Endothelial cell of umbilical vein (primary cell): ENCODE measurements at regions of chr7 and their contacts with region 1.

Region 1: GRCh38 chr7:30983042-30983913 is 19.5 kb downstream of the GHRHR start:
- DNase-seq: peak; percentile 75
- H3K4me3 ChIP-seq: no peak overlapping the region
- H3K27ac ChIP-seq: no peak overlapping the region
- H3K4me1 ChIP-seq: peaks cover 26% of the 10 kb centered on the region
- H3K27me3 ChIP-seq: peaks cover 4 to 5% of the 10 kb centered on the region in 2 experiments
- CTCF ChIP-seq: peak; percentile 80 to 99
- POLR2A ChIP-seq: no peak

Region 2: DNA sequence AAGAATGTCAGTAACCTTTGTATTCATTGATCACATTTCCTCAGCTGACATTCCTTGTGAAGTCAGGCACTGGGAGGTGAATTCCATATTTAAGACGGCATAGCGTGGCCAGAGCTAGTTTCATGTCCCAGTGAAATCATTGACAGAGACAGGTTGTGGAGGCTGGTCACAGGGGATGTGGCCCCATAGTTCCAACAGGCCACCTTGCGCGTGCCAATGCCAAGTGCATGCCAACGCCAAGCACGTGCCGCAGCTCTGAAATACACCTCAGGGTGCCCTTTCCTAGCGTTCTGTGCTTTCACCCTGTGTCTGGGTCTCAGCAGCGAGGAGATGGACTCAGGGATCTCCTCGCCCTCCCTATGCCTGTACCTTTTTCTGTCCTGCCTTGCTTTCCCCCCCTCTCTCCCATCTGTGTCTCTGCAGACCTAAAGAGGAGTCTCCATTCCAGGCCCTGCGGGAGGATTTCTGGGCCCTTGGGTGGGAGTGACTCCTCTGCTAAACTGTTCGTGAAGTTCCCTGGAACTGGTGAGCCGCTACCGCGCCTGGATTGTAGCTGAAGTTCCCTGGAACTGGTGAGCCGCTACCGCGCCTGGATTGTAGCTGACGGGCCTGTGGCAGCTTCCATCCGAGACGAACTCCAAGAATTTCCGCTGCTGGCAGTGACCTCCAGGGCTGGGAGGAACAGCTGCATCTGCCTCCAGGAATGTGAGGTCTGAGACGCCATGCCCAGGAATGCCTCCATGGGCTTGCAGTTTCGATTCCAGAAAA is 51.9 kb before region 1 on chr7:
- CTCF ChIA-PET with region 1: interaction called, 11 read pairs
- POLR2A ChIA-PET with region 1: interaction called, 13 read pairs
- dilution Hi-C with region 1: no loop called
- intact Hi-C with region 1: no loop called
- DNase-seq: no peak
- H3K4me3 ChIP-seq: no peak overlapping the region
- H3K27ac ChIP-seq: no peak overlapping the region
- H3K4me1 ChIP-seq: no peaks in the 10 kb centered on the region
- H3K27me3 ChIP-seq: peaks cover 0 to 1% of the 10 kb centered on the region in 2 experiments
- CTCF ChIP-seq: no peak
- POLR2A ChIP-seq: no peak

Region 3: GRCh38 chr7:31027161-31027965 is 44.1 kb after region 1 on chr7:
- CTCF ChIA-PET with region 1: interaction called, 14 read pairs
- POLR2A ChIA-PET with region 1: no interaction called
- dilution Hi-C with region 1: no loop called
- intact Hi-C with region 1: no loop called
- DNase-seq: no peak
- H3K4me3 ChIP-seq: no peak overlapping the region
- H3K27ac ChIP-seq: no peak overlapping the region
- H3K4me1 ChIP-seq: no peaks in the 10 kb centered on the region
- H3K27me3 ChIP-seq: peaks cover 0 to 5% of the 10 kb centered on the region in 2 experiments
- CTCF ChIP-seq: no peak
- POLR2A ChIP-seq: no peak

Region 4: GRCh38 chr7:31052841-31053601 is 69.7 kb after region 1 on chr7:
- CTCF ChIA-PET with region 1: interaction called, 11 read pairs
- POLR2A ChIA-PET with region 1: no interaction called
- dilution Hi-C with region 1: no loop called
- intact Hi-C with region 1: no loop called
- DNase-seq: no peak
- H3K4me3 ChIP-seq: no peak overlapping the region
- H3K27ac ChIP-seq: no peak overlapping the region
- H3K4me1 ChIP-seq: no peaks in the 10 kb centered on the region
- H3K27me3 ChIP-seq: peaks cover 32 to 44% of the 10 kb centered on the region in 2 experiments
- CTCF ChIP-seq: no peak
- POLR2A ChIP-seq: no peak

Region 5: GRCh38 chr7:31082447-31082846 is 99.2 kb after region 1 on chr7:
- CTCF ChIA-PET with region 1: interaction called, 5 read pairs
- POLR2A ChIA-PET with region 1: no interaction called
- dilution Hi-C with region 1: no loop called
- intact Hi-C with region 1: loop called (anchors 1 kb)
- DNase-seq: peak; percentile 28
- H3K4me3 ChIP-seq: no peak overlapping the region
- H3K27ac ChIP-seq: no peak overlapping the region
- H3K4me1 ChIP-seq: peaks cover 24% of the 10 kb centered on the region
- H3K27me3 ChIP-seq: no peaks in the 10 kb centered on the region
- CTCF ChIP-seq: no peak
- POLR2A ChIP-seq: no peak

Region 6: DNA sequence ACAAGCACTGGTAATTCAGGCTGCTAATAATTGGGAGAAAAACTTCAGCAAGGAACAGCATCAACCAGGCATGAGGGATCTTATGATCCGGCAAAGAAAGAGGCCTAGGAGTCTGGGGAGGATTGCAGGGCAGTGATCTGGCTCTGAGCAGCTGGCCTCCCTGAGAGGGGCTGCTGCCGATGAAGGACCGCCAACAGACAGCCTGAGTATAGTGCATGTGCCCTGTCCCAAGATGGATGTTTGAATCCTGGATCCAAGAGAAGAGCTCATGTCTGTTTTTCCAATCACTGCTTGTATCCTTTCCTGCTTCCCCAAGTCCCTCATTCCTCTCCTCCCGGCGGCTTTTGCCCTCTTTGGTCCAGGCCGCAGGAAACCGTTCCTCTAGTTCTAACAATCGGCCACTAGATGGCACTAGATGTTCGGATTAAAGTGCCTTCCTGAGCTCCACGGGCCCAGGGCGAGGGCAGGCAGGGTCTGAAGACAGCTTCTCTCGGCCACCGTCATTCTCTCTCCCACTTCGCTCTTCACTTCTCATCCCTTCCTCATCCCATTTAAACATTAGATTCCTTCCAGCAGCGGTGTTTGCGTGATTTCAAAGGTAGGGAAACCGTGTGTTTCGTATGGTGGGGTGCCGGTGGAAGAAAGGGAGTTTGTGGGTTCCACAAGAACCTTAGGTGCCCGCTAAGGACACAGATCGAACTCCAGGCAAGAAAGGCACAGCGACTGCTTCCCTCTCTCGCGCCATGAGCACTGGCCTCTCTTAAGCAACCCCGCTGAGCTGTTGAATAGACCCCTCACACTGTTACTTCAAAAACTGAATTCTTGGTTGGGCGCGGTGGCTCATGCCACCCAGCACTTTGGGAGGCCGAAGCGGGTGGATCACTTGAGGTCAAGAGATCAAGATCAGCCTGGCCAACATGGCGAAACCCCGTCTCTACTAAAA is 151.2 kb after region 1 on chr7:
- CTCF ChIA-PET with region 1: interaction called, 1,079 read pairs
- POLR2A ChIA-PET with region 1: no interaction called
- dilution Hi-C with region 1: no loop called
- intact Hi-C with region 1: no loop called
- DNase-seq: peak; percentile 58
- H3K4me3 ChIP-seq: no peak overlapping the region
- H3K27ac ChIP-seq: no peak overlapping the region
- H3K4me1 ChIP-seq: no peaks in the 10 kb centered on the region
- H3K27me3 ChIP-seq: no peaks in the 10 kb centered on the region
- CTCF ChIP-seq: peak; percentile 64 to 72
- POLR2A ChIP-seq: no peak